Naive thymus-derived CD4-positive, alpha-beta T cell (primary cell): ENCODE measurements at regions of chrX and their contacts with region 1.

Region 1: DNA sequence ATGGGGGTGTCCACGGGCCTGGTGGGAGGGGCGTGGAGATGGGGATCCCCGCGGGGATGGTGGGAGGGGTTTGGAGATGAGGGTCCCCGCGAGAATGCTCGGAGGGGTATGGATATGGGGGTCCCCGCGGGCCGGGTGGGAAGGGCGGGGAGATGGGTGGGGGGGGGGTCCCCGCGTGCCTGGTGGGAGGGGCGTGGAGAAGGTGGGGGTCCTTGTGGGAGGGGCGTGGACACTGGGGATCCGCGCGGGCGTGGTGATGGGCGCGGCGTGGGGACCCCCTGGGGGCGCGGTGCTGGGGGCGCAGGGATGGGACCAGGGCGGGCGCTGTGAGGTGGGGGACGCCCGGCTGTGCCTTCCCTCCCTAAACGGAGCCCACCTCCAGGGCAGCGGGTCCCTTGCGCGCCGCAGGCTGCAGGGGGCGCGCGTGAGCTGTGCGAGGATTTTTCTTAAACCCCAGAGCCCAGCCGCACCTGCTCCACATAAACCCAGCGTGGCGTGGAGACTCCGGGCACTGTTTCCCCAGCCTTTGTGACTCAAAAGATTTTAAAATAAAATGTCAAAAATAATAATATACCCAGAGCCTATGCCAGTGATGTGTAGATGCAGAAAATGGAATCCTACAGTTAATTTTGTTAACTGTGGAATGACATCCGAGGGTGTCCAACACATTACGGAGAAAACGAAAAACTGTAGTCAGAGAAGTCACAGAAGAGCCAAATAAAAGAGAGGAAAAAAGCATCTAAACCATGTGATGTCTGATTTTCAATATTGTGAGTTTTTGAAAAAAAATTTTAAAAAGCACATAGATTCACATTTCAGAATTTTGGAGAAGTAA is 1.5 kb upstream of the ASMTL start:
- DNase-seq: peak; percentile 82 to 94 (median 89)
- ATAC-seq: peak; percentile 26
- H3K4me3 ChIP-seq: no peak overlapping the region
- H3K4me3 Mint-ChIP-seq: peak overlapping the region; percentile 49 to 93 (median 68)
- H3K27ac ChIP-seq: peak overlapping the region; percentile 99
- H3K27ac Mint-ChIP-seq: peak overlapping the region in 8 of 9 donors; percentile 68 to 90 (median 80)
- H3K4me1 ChIP-seq: peaks cover 24 to 41% of the 10 kb centered on the region in 2 donors
- H3K4me1 Mint-ChIP-seq: peaks cover 3 to 29% (median 24%) of the 10 kb centered on the region in 7 donors
- H3K27me3 ChIP-seq: no peaks in the 10 kb centered on the region
- H3K27me3 Mint-ChIP-seq: peaks cover 0 to 2% (median 0%) of the 10 kb centered on the region in 5 donors

Region 2: DNA sequence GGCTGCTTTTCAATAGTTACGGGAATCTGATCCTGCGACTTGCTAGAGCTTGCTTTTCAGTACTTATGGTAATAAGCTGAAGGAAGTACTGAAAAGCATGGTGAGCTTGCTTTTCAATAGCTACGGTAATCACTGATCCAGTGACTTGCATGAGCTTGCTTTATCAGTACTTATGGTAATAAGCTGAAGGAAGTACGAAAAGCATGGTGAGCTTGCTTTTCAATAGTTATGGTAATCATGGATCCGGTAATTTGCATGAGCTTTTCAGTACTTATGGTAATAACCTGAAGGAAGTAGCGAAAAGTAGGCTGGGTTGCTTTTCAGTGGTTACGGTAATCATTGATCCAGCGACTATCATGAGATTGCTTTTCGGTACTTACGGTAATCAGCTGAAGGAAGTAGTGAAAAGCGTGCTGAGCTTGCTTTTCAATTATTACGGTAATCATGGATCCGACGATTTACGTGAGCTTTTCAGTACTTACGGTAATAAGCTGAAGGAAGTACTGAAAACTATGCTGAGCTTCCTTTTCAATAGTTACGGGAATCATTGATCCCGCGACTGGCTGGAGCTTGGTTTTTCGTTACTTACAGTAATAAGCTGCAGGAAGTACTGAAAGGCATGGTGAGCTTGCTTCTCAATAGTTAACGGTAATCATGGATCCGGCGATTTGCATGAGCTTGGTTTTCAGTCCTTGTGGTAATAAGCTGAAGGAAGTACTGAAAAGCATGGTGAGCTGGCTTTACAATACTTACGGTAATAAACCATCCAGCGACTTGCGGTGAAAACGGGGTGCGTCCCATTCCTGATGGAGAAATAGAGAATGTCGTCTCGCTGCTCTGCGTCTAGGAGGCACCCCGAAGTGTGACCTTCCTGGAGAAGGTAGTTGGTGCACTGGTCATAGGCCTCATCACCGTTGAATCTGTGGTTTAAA is 248.2 kb before region 1 on chrX:
- CTCF ChIA-PET with region 1: no interaction called
- POLR2A ChIA-PET with region 1: no interaction called
- intact Hi-C with region 1: loop called in 1 of 2 experiments (anchors 2 kb)
- DNase-seq: peak; percentile 14 to 77 (median 69)
- ATAC-seq: peak; percentile 70
- H3K4me3 ChIP-seq: peak overlapping the region; percentile 56
- H3K4me3 Mint-ChIP-seq: peak overlapping the region; percentile 76 to 87 (median 83)
- H3K27ac ChIP-seq: no peak overlapping the region
- H3K27ac Mint-ChIP-seq: peak overlapping the region in 7 of 9 donors; percentile 22 to 68 (median 36)
- H3K4me1 ChIP-seq: peaks cover 6 to 11% of the 10 kb centered on the region in 2 donors
- H3K4me1 Mint-ChIP-seq: peaks cover 15 to 42% (median 32%) of the 10 kb centered on the region in 7 donors
- H3K27me3 ChIP-seq: no peaks in the 10 kb centered on the region
- H3K27me3 Mint-ChIP-seq: no peaks in the 10 kb centered on the region

Region 3: DNA sequence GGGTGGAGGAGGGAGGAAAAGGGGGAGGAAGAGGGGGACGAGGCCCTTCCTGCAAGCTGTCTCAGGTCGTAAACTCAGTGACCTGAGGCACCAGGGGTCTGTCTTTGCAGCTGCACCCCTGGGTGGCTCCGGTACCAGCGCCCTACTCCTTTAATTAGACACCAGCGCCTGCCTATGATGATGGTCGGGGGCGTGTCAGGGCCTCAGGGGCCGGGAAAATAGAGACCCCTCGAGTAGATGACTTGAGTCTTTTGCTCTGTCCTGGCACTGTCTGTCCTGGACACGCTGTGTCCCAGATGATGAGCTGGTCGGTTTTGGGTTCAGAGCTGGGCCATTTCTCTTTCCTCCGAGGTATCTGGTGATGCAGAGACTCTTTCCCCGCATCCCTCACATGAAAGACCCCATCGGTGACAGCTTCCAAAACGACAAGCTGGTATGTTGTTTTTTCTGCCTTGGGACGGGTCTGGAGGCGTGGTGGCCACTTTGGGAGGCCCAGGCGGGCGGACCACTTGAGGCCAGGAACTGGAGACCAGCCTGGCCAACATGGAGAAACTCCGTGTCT is 73.4 kb before region 1 on chrX:
- CTCF ChIA-PET with region 1: no interaction called
- POLR2A ChIA-PET with region 1: no interaction called
- intact Hi-C with region 1: no loop called
- DNase-seq: no peak
- ATAC-seq: peak; percentile 5
- H3K4me3 ChIP-seq: no peak overlapping the region
- H3K4me3 Mint-ChIP-seq: no peak overlapping the region
- H3K27ac ChIP-seq: no peak overlapping the region
- H3K27ac Mint-ChIP-seq: peak overlapping the region in 1 of 9 donors; percentile 43
- H3K4me1 ChIP-seq: no peaks in the 10 kb centered on the region
- H3K4me1 Mint-ChIP-seq: peaks cover 0 to 6% (median 4%) of the 10 kb centered on the region in 7 donors
- H3K27me3 ChIP-seq: no peaks in the 10 kb centered on the region
- H3K27me3 Mint-ChIP-seq: no peaks in the 10 kb centered on the region

Region 4: GRCh38 chrX:1468250-1468772 is 14.1 kb after region 1 on chrX:
- CTCF ChIA-PET with region 1: no interaction called
- POLR2A ChIA-PET with region 1: no interaction called
- intact Hi-C with region 1: loop called (anchors 1 kb)
- DNase-seq: peak; percentile 44 to 77 (median 60)
- ATAC-seq: peak; percentile 55
- H3K4me3 ChIP-seq: no peak overlapping the region
- H3K4me3 Mint-ChIP-seq: peak overlapping the region; percentile 51 to 87 (median 74)
- H3K27ac ChIP-seq: peak overlapping the region; percentile 71
- H3K27ac Mint-ChIP-seq: peak overlapping the region; percentile 90 to 98 (median 97)
- H3K4me1 ChIP-seq: peaks cover 83 to 86% of the 10 kb centered on the region in 2 donors
- H3K4me1 Mint-ChIP-seq: peaks cover 36 to 92% (median 84%) of the 10 kb centered on the region in 7 donors
- H3K27me3 ChIP-seq: no peaks in the 10 kb centered on the region
- H3K27me3 Mint-ChIP-seq: no peaks in the 10 kb centered on the region

Region 5: DNA sequence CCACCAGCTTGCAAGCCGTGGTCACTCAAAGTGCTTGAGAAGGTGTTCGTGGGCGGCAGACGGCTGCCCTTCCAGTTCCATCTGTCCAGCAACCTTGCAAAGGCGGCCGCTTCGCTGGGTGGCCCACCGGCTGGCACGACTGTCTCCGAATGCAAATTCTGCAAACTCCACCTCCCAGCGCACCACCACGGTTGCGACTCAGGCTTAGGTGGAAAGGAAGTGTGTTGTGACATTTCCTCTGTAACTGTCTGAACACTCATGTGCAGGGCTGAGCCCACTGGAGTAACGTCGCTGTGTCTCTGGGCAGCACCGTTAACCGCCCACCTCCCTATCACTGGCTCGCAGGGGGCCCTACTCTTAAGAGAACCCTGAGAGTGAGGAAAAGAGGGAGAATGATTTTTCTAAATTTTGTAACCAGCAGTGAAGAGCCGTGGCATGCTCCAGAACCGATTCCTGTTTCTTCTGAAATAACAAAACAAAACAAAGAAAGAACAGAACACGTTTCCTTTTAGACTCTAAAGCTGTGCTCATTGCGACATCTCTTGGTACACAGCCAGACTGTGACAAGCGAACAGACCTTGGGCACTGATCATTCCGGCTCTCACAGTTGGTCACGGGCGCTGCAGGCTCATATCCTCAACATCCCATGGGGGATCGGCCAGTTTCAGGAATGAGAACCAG is 83.0 kb after region 1 on chrX and contains the start of gene P2RY8:
- CTCF ChIA-PET with region 1: no interaction called
- POLR2A ChIA-PET with region 1: no interaction called
- intact Hi-C with region 1: loop called (anchors 1 kb)
- DNase-seq: peak; percentile 56 to 88 (median 80)
- ATAC-seq: peak; percentile 91
- H3K4me3 ChIP-seq: peak within 1 kb of the TSS; percentile 81
- H3K4me3 Mint-ChIP-seq: peak within 1 kb of the TSS; percentile 89 to 99 (median 98)
- H3K27ac ChIP-seq: peak within 1 kb of the TSS; percentile 88
- H3K27ac Mint-ChIP-seq: peak within 1 kb of the TSS; percentile 98 to 100 (median 99)
- H3K4me1 ChIP-seq: peaks cover 3 to 6% of the 10 kb centered on the region in 2 donors
- H3K4me1 Mint-ChIP-seq: peaks cover 11 to 29% (median 20%) of the 10 kb centered on the region in 7 donors
- H3K27me3 ChIP-seq: no peaks in the 10 kb centered on the region
- H3K27me3 Mint-ChIP-seq: no peaks in the 10 kb centered on the region
- total RNA-seq, gene P2RY8: 109 to 158 (median 122) TPM

Region 6: DNA sequence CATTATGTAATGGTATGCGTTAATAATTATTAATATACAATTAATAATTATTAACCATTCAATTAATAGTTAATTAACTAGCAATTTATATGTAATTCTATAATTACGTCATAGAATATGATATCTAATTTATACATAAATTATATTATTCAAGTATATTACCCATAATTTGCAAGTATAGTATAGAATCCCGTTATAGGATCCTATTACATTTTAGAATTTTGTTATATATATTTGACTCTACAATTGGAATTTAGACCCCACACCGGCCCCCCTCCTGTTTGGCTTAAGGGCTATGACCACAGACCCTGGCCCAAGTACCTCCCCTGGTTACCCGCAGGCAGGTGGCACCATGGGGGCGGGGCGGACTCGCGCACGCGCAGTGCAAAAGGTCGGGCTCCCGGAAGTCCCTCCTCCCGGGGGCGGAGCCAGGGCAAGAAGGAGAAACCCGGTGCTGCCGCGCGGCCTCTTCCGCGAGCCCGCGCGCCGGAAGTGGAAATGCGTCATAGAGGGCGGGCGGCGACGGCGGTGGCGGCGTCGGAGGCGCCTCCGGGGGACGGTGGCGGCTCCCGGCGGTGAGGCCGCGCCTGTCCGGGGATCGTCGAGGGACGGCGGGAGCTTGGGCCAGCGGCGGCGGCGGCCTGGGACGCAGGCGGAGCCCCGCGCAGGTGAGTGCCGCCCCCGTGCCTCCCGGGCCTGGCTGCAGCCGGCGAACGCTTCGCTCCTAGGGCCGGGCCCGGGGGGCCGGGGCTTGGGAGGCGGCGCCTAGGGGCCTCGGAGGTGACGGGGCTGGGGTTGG is 137.1 kb after region 1 on chrX and contains the start of gene AKAP17A:
- CTCF ChIA-PET with region 1: no interaction called
- POLR2A ChIA-PET with region 1: no interaction called
- intact Hi-C with region 1: loop called (anchors 1 kb)
- DNase-seq: peak; percentile 92 to 100 (median 99)
- ATAC-seq: peak; percentile 95
- H3K4me3 ChIP-seq: peak within 1 kb of the TSS; percentile 76
- H3K4me3 Mint-ChIP-seq: peak within 1 kb of the TSS; percentile 85 to 97 (median 91)
- H3K27ac ChIP-seq: peak within 1 kb of the TSS; percentile 91
- H3K27ac Mint-ChIP-seq: peak within 1 kb of the TSS; percentile 82 to 94 (median 91)
- H3K4me1 ChIP-seq: peaks cover 7 to 10% of the 10 kb centered on the region in 2 donors
- H3K4me1 Mint-ChIP-seq: peaks cover 5 to 50% (median 34%) of the 10 kb centered on the region in 7 donors
- H3K27me3 ChIP-seq: no peaks in the 10 kb centered on the region
- H3K27me3 Mint-ChIP-seq: no peaks in the 10 kb centered on the region
- total RNA-seq, gene AKAP17A: 75.7 to 165 (median 125) TPM

Region 7: DNA sequence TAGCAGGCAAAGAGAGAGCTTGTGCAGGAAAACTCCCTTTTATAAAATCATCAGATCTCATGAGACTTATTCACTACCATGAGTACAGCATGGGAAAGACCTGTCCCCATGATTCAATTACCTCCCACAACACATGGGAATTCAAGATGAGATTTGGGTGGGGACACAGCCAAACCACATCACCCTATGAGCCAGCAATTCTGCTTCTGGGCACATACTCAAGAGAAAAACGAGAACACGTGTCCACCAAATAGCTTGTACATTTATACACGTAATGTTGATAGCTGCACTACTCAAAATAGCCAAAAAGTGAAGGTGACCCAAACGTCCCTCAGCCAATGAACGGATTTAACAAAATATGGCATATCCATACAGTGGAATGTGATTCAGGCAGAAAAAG is 1141.1 kb after region 1 on chrX:
- CTCF ChIA-PET with region 1: no interaction called
- POLR2A ChIA-PET with region 1: no interaction called
- intact Hi-C with region 1: loop called (anchors 1 to 2 kb)
- DNase-seq: no peak
- ATAC-seq: no peak
- H3K4me3 ChIP-seq: no peak overlapping the region
- H3K4me3 Mint-ChIP-seq: no peak overlapping the region
- H3K27ac ChIP-seq: no peak overlapping the region
- H3K27ac Mint-ChIP-seq: peak overlapping the region in 4 of 9 donors; percentile 3 to 59 (median 23)
- H3K4me1 ChIP-seq: no peaks in the 10 kb centered on the region
- H3K4me1 Mint-ChIP-seq: peaks cover 0 to 20% (median 12%) of the 10 kb centered on the region in 7 donors
- H3K27me3 ChIP-seq: no peaks in the 10 kb centered on the region
- H3K27me3 Mint-ChIP-seq: no peaks in the 10 kb centered on the region

Region 8: GRCh38 chrX:2690856-2691542 is 1236.8 kb after region 1 on chrX and contains the start of gene CD99:
- CTCF ChIA-PET with region 1: no interaction called
- POLR2A ChIA-PET with region 1: no interaction called
- intact Hi-C with region 1: loop called (anchors 1 kb)
- DNase-seq: peak; percentile 81 to 93 (median 85)
- ATAC-seq: peak; percentile 96
- H3K4me3 ChIP-seq: peak within 1 kb of the TSS; percentile 91
- H3K4me3 Mint-ChIP-seq: peak within 1 kb of the TSS; percentile 87 to 98 (median 95)
- H3K27ac ChIP-seq: peak within 1 kb of the TSS; percentile 83
- H3K27ac Mint-ChIP-seq: peak within 1 kb of the TSS; percentile 80 to 95 (median 91)
- H3K4me1 ChIP-seq: peaks cover 31 to 33% of the 10 kb centered on the region in 2 donors
- H3K4me1 Mint-ChIP-seq: peaks cover 36 to 42% (median 39%) of the 10 kb centered on the region in 7 donors
- H3K27me3 ChIP-seq: no peaks in the 10 kb centered on the region
- H3K27me3 Mint-ChIP-seq: peaks cover 0 to 11% (median 0%) of the 10 kb centered on the region in 5 donors
- total RNA-seq, gene CD99: 112 to 293 (median 181) TPM